WTC11 (cell line): ENCODE measurements at regions of chr7 and their contacts with region 1.

Region 1: DNA sequence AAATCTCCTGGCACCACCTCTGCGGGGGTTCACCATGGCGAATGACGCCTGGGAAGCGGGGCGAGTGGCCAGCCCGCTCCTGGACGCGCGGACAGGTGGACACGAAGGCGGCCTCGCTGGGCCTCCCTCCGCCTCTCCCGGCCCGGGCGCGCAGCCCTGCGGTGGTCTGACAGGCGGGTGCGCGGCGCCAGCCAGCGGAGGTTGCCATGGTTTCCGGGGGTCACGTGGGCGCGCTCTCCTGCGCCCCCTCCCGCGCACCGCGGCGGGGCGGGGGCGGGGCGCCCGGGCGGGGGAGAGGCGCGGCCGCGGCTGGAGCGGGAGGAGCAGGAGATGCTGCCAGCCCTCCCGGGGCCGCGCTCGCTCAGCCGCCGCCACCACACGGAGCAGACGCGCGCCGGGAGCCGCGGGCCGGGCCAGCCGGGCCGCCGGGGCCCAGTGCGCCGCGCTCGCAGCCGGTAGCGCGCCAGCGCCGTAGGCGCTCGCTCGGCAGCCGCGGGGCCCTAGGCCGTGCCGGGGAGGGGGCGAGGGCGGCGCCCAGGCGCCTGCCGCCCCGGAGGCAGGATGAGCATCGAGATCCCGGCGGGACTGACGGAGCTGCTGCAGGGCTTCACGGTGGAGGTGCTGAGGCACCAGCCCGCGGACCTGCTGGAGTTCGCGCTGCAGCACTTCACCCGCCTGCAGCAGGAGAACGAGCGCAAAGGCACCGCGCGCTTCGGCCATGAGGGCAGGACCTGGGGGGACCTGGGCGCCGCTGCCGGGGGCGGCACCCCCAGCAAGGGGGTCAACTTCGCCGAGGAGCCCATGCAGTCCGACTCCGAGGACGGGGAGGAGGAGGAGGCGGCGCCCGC is at the start of gene PRKAR2B:
- DNase-seq: peak; percentile 83
- ATAC-seq: peak; percentile 85
- H3K4me3 Mint-ChIP-seq: peak within 1 kb of the TSS; percentile 90
- H3K27ac Mint-ChIP-seq: no peak within 1 kb of the TSS
- H3K4me1 Mint-ChIP-seq: peaks cover 41% of the 10 kb centered on the region
- H3K27me3 Mint-ChIP-seq: peaks cover 12% of the 10 kb centered on the region
- CTCF ChIP-seq: no peak
- total RNA-seq, gene PRKAR2B: 17.5 to 29.6 TPM (median 17.7 TPM) in 3 replicates

Region 2: DNA sequence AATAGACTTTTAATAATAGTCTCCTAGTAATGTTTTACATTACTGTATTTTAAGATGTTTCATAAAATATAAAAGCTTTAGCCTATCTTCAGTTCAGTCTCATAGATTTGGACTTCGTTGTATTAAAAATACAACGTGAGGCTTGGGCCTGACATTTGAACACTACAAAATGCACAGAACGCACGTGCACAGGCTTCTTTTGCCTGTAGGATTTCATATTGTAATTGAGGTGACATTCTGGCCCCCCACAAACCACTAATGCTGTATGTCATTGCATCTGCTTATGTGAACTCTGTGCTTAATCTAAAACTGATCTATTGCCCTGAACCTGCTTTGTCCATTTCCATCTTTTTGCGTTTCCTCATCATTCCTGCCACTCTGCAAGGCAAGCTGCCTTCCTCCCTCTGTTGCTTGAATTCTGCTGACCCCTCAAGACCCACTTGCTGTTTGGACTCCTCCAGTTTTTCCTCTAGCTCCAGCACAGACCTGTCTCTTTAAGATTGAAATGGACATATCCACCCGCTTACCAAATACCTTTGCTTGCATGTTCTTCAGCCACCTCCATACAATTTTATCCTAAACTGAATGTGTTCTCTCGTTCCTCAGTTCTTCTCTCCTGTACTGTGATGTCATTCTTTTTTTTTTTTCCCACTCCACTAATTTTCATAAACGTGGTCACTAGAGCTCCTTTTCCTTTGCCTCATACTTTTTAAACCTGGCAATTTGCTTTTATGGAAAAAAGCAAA is 12.3 kb after region 1 on chr7:
- CTCF ChIA-PET with region 1: interaction called, 16 read pairs
- POLR2A ChIA-PET with region 1: no interaction called
- DNase-seq: no peak
- ATAC-seq: no peak
- H3K4me3 Mint-ChIP-seq: no peak overlapping the region
- H3K27ac Mint-ChIP-seq: no peak overlapping the region
- H3K4me1 Mint-ChIP-seq: no peaks in the 10 kb centered on the region
- H3K27me3 Mint-ChIP-seq: no peaks in the 10 kb centered on the region
- CTCF ChIP-seq: no peak

Region 3: GRCh38 chr7:107130487-107131225 is 86.1 kb after region 1 on chr7:
- CTCF ChIA-PET with region 1: interaction called, 12 read pairs
- POLR2A ChIA-PET with region 1: no interaction called
- DNase-seq: no peak
- ATAC-seq: peak; percentile 96
- H3K4me3 Mint-ChIP-seq: peak overlapping the region; percentile 33
- H3K27ac Mint-ChIP-seq: peak overlapping the region; percentile 94
- H3K4me1 Mint-ChIP-seq: peaks cover 37% of the 10 kb centered on the region
- H3K27me3 Mint-ChIP-seq: no peaks in the 10 kb centered on the region
- CTCF ChIP-seq: no peak